Vagina (tissue), 2 donors: ENCODE measurements at regions of chr6 and their contacts with region 1.

Region 1: GRCh38 chr6:163876391-163876790 is 461.9 kb downstream of the QKI start:
- DNase-seq: no peak
- H3K4me3 ChIP-seq: no peak overlapping the region
- H3K27ac ChIP-seq: no peak overlapping the region
- H3K4me1 ChIP-seq: no peaks in the 10 kb centered on the region
- H3K27me3 ChIP-seq: no peaks in the 10 kb centered on the region
- CTCF ChIP-seq: no peak
- POLR2A ChIP-seq: no peak

Region 2: GRCh38 chr6:163301726-163302635 is 574.4 kb before region 1 on chr6:
- intact Hi-C with region 1: no loop called
- DNase-seq: no peak
- H3K4me3 ChIP-seq: no peak overlapping the region
- H3K27ac ChIP-seq: no peak overlapping the region
- H3K4me1 ChIP-seq: no peaks in the 10 kb centered on the region
- H3K27me3 ChIP-seq: no peaks in the 10 kb centered on the region
- CTCF ChIP-seq: no peak
- POLR2A ChIP-seq: no peak

Region 3: DNA sequence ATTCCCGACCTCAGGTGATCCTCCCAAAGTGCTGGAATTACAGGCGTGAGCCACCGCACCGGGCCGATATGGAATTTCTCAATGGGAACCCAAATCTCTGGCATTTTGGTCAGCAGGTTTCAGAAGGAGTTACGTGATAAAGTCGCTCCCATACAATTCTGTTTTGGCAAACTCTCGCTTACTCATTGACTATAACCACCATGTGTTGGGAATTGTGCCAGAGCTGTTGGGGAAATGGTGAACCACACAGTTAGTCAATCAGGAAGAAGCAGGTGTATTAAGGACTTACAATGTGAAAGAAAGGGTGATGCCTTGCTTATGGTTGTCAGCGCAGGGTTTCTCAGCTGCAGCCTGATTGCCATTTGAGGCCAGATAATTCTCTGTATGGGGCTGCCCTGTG is 51.4 kb before region 1 on chr6:
- intact Hi-C with region 1: no loop called
- DNase-seq: no peak
- H3K4me3 ChIP-seq: no peak overlapping the region
- H3K27ac ChIP-seq: no peak overlapping the region
- H3K4me1 ChIP-seq: no peaks in the 10 kb centered on the region
- H3K27me3 ChIP-seq: no peaks in the 10 kb centered on the region
- CTCF ChIP-seq: no peak
- POLR2A ChIP-seq: no peak

Region 4: DNA sequence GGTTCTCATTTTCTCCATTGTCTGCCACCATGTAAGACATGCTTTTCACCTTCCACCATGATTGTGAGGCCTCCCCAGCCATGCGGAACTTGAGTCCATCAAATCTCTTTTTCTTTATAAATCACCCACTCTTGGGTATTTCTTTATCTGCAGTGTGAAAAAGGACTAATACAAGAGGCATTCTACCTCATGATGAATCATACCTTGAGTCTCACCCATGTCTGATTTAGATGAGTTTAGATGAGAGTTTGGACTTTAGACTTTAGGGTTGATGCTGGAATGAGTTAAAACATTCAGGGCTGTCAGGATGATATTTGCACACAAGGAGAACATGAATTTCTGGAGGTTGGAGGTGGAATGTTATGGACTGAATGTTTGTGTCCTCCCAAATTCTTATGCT is 887.4 kb after region 1 on chr6:
- intact Hi-C with region 1: loop called (anchors 5 kb)
- DNase-seq: no peak
- H3K4me3 ChIP-seq: no peak overlapping the region
- H3K27ac ChIP-seq: no peak overlapping the region
- H3K4me1 ChIP-seq: no peaks in the 10 kb centered on the region
- H3K27me3 ChIP-seq: no peaks in the 10 kb centered on the region
- CTCF ChIP-seq: no peak
- POLR2A ChIP-seq: no peak